Calu3 (cell line): ENCODE measurements at regions of chr6 and their contacts with region 1.

Region 1: GRCh38 chr6:152552616-152553209 is 84.4 kb downstream of the SYNE1 start:
- DNase-seq: peak; percentile 60
- H3K4me3 Mint-ChIP-seq: no peak overlapping the region
- H3K27ac Mint-ChIP-seq: no peak overlapping the region
- H3K4me1 Mint-ChIP-seq: no peaks in the 10 kb centered on the region
- H3K27me3 Mint-ChIP-seq: no peaks in the 10 kb centered on the region
- CTCF ChIP-seq: peak; percentile 56

Region 2: DNA sequence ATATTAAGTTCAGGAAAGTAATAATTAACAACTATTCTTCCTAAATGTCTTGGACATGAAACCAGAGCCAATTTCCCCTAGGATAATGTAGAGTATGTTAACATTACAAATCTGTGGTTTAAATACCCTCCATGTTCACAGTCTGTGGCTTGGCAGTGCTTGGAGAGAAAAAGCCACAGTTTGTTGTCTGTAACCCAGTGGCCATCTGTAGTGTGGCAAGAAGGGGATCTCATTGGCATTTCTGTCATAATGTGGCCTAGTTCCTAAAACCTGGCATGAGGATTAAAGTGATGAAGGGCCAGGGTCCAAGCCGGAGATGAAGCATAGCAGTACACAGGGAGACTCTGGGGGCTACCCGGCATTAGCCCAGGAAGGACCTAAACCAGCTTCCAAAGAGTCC is 53.2 kb after region 1 on chr6:
- CTCF ChIA-PET with region 1: no interaction called
- intact Hi-C with region 1: no loop called
- DNase-seq: no peak
- H3K4me3 Mint-ChIP-seq: no peak overlapping the region
- H3K27ac Mint-ChIP-seq: no peak overlapping the region
- H3K4me1 Mint-ChIP-seq: no peaks in the 10 kb centered on the region
- H3K27me3 Mint-ChIP-seq: peaks cover 9% of the 10 kb centered on the region
- CTCF ChIP-seq: no peak

Region 3: GRCh38 chr6:152642989-152643388 is 90.3 kb after region 1 on chr6:
- CTCF ChIA-PET with region 1: interaction called, 3 read pairs
- intact Hi-C with region 1: loop called (anchors 1 kb)
- DNase-seq: peak; percentile 59
- H3K4me3 Mint-ChIP-seq: no peak overlapping the region
- H3K27ac Mint-ChIP-seq: no peak overlapping the region
- H3K4me1 Mint-ChIP-seq: no peaks in the 10 kb centered on the region
- H3K27me3 Mint-ChIP-seq: peaks cover 33% of the 10 kb centered on the region
- CTCF ChIP-seq: no peak

Region 4: DNA sequence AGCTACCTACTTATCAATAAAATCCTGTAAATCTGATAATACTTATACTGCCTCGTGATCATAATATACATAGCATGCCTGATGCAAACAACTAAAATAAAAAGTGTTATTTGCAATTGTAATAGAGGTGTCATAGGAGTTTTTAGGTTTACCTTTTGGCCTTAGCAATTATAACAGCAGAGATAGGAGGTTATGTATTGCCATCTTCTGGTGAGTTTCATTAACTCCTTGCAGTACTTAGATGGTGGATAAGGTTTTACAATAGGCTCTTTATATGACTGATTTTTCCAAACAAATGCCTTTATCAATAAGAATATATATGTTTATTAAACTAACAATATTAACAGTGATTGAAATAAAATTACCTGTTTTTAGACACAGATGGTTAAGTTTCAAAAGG is 117.2 kb after region 1 on chr6:
- CTCF ChIA-PET with region 1: no interaction called
- intact Hi-C with region 1: loop called (anchors 1 kb)
- DNase-seq: no peak
- H3K4me3 Mint-ChIP-seq: no peak overlapping the region
- H3K27ac Mint-ChIP-seq: no peak overlapping the region
- H3K4me1 Mint-ChIP-seq: no peaks in the 10 kb centered on the region
- H3K27me3 Mint-ChIP-seq: no peaks in the 10 kb centered on the region
- CTCF ChIP-seq: no peak

Region 5: GRCh38 chr6:152775428-152775827 is 222.7 kb after region 1 on chr6:
- CTCF ChIA-PET with region 1: no interaction called
- intact Hi-C with region 1: no loop called
- DNase-seq: no peak
- H3K4me3 Mint-ChIP-seq: no peak overlapping the region
- H3K27ac Mint-ChIP-seq: no peak overlapping the region
- H3K4me1 Mint-ChIP-seq: no peaks in the 10 kb centered on the region
- H3K27me3 Mint-ChIP-seq: no peaks in the 10 kb centered on the region
- CTCF ChIP-seq: no peak

Region 6: DNA sequence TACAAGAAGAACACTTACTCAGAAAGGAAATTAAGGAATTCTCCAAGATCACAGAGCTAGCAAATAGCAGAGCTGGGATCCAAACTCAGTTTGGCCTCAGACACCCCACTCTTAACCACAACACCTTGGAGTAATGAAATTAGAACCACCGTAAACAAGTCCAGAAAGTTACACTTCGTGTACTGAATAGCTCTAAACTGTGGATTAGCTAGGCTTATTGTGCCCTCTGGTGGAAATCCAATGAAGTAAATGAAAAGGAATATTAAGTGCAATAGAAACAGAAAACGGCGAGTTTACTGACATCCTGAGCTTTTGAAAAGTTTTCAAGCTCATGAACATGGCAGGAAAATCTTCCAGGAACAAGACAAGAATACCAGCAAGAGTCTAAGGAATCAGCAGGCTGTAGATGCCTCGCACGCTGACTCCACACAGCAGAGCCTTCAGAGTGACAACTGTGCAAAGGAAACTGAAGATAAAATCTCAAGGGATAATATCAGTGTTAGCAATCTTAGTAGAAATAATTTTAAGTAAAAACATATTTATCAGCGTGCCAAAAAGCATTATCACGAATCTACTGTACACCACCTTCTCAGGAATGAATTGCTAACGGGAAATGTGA is 395.5 kb after region 1 on chr6:
- CTCF ChIA-PET with region 1: no interaction called
- intact Hi-C with region 1: loop called (anchors 2 kb)
- DNase-seq: peak; percentile 6
- H3K4me3 Mint-ChIP-seq: no peak overlapping the region
- H3K27ac Mint-ChIP-seq: no peak overlapping the region
- H3K4me1 Mint-ChIP-seq: peaks cover 7% of the 10 kb centered on the region
- H3K27me3 Mint-ChIP-seq: no peaks in the 10 kb centered on the region
- CTCF ChIP-seq: peak; percentile 51